Heart left ventricle (tissue), 16 donors: ENCODE measurements at regions of chr1 and their contacts with region 1.

Region 1: GRCh38 chr1:181166377-181167196 is 78.1 kb downstream of the IER5 start:
- DNase-seq: peak in 4 of 5 donors; percentile 67 to 75 (median 70)
- ATAC-seq: peak; percentile 92 to 99 (median 97)
- H3K4me3 ChIP-seq: no peak overlapping the region
- H3K27ac ChIP-seq: no peak overlapping the region
- H3K4me1 ChIP-seq: peaks cover 0 to 9% (median 0%) of the 10 kb centered on the region in 12 donors
- H3K27me3 ChIP-seq: no peaks in the 10 kb centered on the region
- CTCF ChIP-seq: peak; percentile 78 to 90 (median 86)
- POLR2A ChIP-seq: no peak

Region 2: GRCh38 chr1:180515864-180516388 is 650.7 kb before region 1 on chr1:
- intact Hi-C with region 1: loop called in 7 of 10 experiments (anchors 5 to 10 kb)
- DNase-seq: peak in 4 of 5 donors; percentile 61 to 69 (median 66)
- ATAC-seq: peak; percentile 90 to 98 (median 96)
- H3K4me3 ChIP-seq: no peak overlapping the region
- H3K27ac ChIP-seq: peak overlapping the region in 1 of 12 donors; percentile 21
- H3K4me1 ChIP-seq: peaks cover 0 to 19% (median 10%) of the 10 kb centered on the region in 12 donors
- H3K27me3 ChIP-seq: no peaks in the 10 kb centered on the region
- CTCF ChIP-seq: peak; percentile 73 to 91 (median 88)
- POLR2A ChIP-seq: no peak

Region 3: DNA sequence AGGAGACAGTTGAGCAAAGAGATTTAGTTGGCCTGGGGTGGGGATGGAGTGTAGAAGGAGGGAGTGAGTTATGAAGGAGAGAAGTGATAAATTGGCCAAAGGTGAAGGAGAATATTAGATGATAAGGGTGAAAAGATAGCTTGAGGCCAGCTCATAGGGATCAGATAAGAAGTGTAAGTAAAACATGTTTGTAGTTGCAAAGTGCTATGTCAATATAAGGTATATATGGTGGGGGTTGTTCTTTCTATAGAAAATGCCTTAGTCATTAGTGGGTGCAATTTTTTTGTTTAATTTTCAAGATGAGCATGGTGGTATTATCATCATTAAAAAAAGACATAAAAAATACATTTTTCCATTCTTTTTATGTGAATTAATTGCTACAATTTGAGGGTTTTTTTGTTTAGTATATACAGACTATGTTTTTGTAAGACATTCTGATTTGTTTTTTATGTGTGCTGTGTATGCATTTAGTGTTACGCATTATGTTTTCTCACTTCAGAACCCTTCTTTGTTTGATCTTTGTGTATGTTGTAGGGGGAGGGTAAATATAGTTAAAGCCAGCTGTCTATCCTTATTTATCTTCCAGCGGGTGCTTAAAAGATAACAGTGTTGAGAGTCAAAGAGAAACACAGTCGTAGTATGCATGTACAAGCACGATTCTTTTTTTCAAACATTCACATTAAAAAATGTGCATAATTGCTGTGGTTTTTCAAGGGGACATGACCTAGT is 351.6 kb before region 1 on chr1:
- intact Hi-C with region 1: no loop called
- DNase-seq: no peak
- ATAC-seq: no peak
- H3K4me3 ChIP-seq: no peak overlapping the region
- H3K27ac ChIP-seq: no peak overlapping the region
- H3K4me1 ChIP-seq: peaks cover 0 to 14% (median 0%) of the 10 kb centered on the region in 12 donors
- H3K27me3 ChIP-seq: no peaks in the 10 kb centered on the region
- CTCF ChIP-seq: no peak
- POLR2A ChIP-seq: no peak

Region 4: DNA sequence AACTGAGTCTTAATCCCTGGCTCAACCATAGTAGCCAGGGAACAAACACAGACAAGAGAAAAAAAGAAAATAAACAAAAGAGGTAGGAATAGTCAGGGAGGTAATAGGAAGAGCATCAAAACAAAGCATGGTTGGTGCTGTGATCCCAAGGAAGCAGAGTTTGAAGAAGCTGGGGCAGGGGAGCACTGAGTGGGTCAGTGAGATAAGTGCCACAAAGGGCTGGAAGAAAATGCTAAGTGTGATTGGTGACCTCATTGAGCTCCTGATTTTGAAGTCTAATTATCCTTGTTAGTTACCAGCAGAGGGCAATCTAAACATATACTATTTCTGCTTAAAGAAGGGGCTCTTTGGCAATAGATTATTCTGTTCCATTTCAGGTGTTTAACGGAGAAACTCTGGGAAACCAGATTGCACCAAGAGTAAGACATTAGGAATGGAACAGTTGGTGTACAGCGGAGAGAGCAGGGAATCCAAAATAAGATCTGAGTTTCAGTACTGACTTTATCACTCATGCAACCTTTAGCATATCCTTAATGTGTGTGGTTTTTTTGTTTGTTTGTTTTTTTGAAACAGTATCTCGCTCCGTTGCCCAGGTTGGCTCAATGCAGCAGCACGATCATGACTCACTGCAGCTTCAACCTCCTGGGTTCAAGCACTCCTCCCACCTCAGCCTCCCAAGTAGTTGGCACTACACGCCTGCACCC is 284.6 kb before region 1 on chr1:
- intact Hi-C with region 1: loop called (anchors 2 to 5 kb)
- DNase-seq: no peak
- ATAC-seq: peak in 3 of 4 donors; percentile 45 to 69 (median 55)
- H3K4me3 ChIP-seq: no peak overlapping the region
- H3K27ac ChIP-seq: peak overlapping the region in 1 of 12 donors; percentile 33
- H3K4me1 ChIP-seq: peaks cover 0 to 8% (median 0%) of the 10 kb centered on the region in 12 donors
- H3K27me3 ChIP-seq: no peaks in the 10 kb centered on the region
- CTCF ChIP-seq: peak in 11 of 12 donors; percentile 28 to 63 (median 47)
- POLR2A ChIP-seq: no peak

Region 5: DNA sequence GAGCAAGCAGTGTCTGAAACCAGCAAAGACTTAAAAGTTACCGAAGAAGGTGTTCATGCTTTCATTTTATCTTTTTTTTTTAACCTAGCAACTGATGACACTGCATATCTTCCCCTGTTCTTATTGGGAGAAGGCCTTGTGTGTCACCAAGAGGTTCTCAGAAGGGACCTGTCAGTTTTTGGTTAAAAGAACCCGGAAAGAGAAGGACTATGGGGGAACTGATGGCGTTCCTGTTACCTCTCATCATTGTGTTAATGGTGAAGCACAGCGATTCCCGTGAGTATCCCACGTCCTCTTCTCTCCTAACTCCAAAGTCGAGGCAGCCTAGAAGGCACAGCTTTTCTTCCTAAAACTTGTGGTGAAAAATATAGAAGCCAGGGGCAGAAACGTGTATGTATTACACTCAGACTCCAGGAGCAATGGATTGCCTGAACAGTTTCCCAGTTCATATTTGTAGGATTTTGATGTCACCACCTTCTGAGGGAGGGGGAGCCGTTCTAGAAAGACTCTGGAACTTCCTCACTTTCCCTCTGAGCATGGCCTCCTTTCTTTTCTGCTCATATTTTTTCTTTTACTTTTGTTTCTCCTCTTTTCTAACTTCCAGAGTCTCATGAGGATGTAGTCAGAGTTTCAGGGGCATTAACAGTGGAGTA is 132.7 kb before region 1 on chr1 and contains the start of gene MR1:
- intact Hi-C with region 1: loop called in 7 of 10 experiments (anchors 1 to 5 kb)
- DNase-seq: peak in 1 of 5 donors; percentile 39
- ATAC-seq: peak; percentile 87 to 92 (median 91)
- H3K4me3 ChIP-seq: peak within 1 kb of the TSS in 11 of 12 donors; percentile 26 to 69 (median 53)
- H3K27ac ChIP-seq: peak within 1 kb of the TSS; percentile 80 to 95 (median 85)
- H3K4me1 ChIP-seq: peaks cover 3 to 61% (median 17%) of the 10 kb centered on the region in 12 donors
- H3K27me3 ChIP-seq: no peaks in the 10 kb centered on the region
- CTCF ChIP-seq: no peak
- POLR2A ChIP-seq: peak in 1 of 2 donors; percentile 63
- total RNA-seq, gene MR1: 2.1 to 21.0 (median 3.8) TPM